ENCODE measurements at regions of chr9 and their contacts with region 1.

Region 1: GRCh38 chr9:6353851-6354686 is 25.9 kb downstream of the TPD52L3 start:
- DNase-seq: no peak
- H3K4me3 ChIP-seq: no peak overlapping the region
- H3K27ac ChIP-seq: no peak overlapping the region
- H3K4me1 ChIP-seq: no peaks in the 10 kb centered on the region
- H3K27me3 ChIP-seq: no peaks in the 10 kb centered on the region
- CTCF ChIP-seq: peak; percentile 63 to 75 (median 67)
- POLR2A ChIP-seq: no peak

Region 2: GRCh38 chr9:6566409-6567139 is 212.5 kb after region 1 on chr9:
- intact Hi-C with region 1: loop called (anchors 5 kb)
- DNase-seq: peak in 1 of 2 donors; percentile 33
- H3K4me3 ChIP-seq: no peak overlapping the region
- H3K27ac ChIP-seq: no peak overlapping the region
- H3K4me1 ChIP-seq: no peaks in the 10 kb centered on the region
- H3K27me3 ChIP-seq: no peaks in the 10 kb centered on the region
- CTCF ChIP-seq: no peak
- POLR2A ChIP-seq: no peak

Region 3: GRCh38 chr9:6584881-6585597 is 231.0 kb after region 1 on chr9:
- intact Hi-C with region 1: no loop called
- DNase-seq: no peak
- H3K4me3 ChIP-seq: no peak overlapping the region
- H3K27ac ChIP-seq: no peak overlapping the region
- H3K4me1 ChIP-seq: no peaks in the 10 kb centered on the region
- H3K27me3 ChIP-seq: no peaks in the 10 kb centered on the region
- CTCF ChIP-seq: peak in 3 of 4 experiments; percentile 23 to 50 (median 36)
- POLR2A ChIP-seq: no peak

Region 4: GRCh38 chr9:6667633-6668280 is 313.7 kb after region 1 on chr9:
- intact Hi-C with region 1: loop called (anchors 10 kb)
- DNase-seq: no peak
- H3K4me3 ChIP-seq: no peak overlapping the region
- H3K27ac ChIP-seq: no peak overlapping the region
- H3K4me1 ChIP-seq: no peaks in the 10 kb centered on the region
- H3K27me3 ChIP-seq: no peaks in the 10 kb centered on the region
- CTCF ChIP-seq: peak; percentile 30 to 37 (median 33)
- POLR2A ChIP-seq: no peak

Measured in uterus (tissue), 4 donors.